MCF 10A (cell line): ENCODE measurements at regions of chr5 and their contacts with region 1.

Region 1: DNA sequence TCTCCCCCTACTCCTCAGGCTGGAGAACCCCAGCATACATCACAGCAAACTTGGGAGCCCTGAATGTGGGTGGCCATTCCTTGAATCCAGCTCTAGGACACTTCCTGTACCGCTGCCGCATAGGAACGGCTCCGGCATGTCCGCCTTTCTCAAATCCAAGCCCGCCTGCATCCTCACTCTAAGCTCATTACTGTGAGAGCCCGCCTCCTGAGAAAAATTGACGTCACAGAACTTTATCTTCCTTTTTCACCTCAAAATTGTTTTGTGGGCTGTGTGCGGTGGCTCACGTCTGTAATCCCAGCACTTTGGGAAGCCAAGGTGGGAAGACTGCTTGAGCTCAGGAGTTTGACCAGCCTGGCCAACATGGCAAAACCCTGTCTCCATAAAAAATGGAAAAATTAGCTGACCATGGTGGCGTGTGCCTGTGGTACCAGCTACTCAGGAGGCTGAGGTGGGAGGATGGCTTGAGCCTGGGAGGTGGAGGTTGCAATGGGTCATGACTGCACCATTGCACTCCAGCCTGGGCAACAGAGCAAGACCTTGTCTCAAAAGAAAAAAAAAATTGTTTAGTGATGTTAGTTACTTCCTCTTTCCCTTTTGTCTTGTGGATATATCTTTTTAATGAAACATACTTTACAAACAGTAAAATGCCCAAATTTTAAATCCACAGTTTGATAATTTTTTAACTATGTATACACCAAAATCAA is 22.8 kb downstream of the RNF44 start:
- DNase-seq: no peak
- H3K4me3 Mint-ChIP-seq: no peak overlapping the region
- H3K27ac Mint-ChIP-seq: no peak overlapping the region
- H3K4me1 Mint-ChIP-seq: no peaks in the 10 kb centered on the region
- H3K27me3 Mint-ChIP-seq: no peaks in the 10 kb centered on the region
- CTCF ChIP-seq: no peak

Region 2: DNA sequence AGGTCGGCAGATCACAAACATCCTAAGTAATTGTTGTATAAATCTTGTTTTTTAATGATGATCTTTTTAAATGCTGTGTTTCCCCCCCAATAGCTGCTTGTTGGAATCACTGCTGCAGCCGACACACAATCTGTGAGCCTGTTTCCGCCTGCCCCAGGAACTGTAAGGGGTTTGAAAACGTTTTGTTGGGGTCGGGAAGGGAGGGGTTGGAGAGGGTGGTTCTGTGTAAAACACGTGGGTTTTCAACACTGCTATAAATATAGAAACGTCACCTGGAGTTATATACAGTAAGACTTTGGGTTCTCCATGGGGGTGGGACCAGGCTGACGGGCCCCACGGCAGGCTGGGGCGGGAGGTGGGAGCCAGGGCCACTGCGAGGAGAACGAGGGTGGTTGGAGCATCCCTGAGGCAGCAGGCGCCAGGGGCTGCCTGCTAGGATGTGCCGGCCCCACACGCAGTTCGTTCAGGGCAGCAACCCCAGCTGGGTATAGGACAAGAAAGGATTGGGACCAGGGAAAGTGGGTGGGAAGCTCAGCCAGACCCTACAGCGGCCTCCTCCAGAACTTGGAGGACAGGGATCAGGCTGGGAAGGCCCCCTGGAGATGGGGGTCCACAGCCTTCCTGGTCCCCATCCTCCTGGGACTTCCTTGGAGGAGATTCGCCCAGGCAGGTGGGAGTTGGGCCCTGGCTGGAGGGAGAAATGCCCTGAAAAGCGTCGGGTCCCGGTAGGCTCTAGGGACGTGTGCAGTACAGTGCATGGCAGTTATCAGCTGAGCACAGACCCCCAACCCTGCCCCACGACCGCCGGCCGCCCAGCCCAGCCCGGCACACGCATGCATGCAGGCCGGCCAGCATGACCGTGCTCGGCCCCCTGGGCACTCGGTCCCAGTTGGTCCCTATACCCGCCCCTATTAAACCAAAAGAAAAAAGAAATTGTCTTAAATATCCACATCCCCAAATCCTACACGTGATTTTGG is 13.1 kb after region 1 on chr5:
- CTCF ChIA-PET with region 1: interaction called, 3 read pairs
- POLR2A ChIA-PET with region 1: interaction called, 10 read pairs
- intact Hi-C with region 1: no loop called
- DNase-seq: no peak
- H3K4me3 Mint-ChIP-seq: no peak overlapping the region
- H3K27ac Mint-ChIP-seq: no peak overlapping the region
- H3K4me1 Mint-ChIP-seq: peaks cover 7% of the 10 kb centered on the region
- H3K27me3 Mint-ChIP-seq: no peaks in the 10 kb centered on the region
- CTCF ChIP-seq: no peak